Activated T-helper 1 cell treated with anti-CD3 and anti-CD28 coated beads, Interleukin-12 subunit alpha, Interleukin-12 subunit beta, Interleukin-2, Interleukin-4 antibody, amounts not matched to agents 30 ng/mL and 10 ng/mL and 1 ng/mL, durations not matched to agents 14 hours and 24 hours and 36 hours (primary cell): ENCODE measurements at regions of chr11 and their contacts with region 1.

Region 1: DNA sequence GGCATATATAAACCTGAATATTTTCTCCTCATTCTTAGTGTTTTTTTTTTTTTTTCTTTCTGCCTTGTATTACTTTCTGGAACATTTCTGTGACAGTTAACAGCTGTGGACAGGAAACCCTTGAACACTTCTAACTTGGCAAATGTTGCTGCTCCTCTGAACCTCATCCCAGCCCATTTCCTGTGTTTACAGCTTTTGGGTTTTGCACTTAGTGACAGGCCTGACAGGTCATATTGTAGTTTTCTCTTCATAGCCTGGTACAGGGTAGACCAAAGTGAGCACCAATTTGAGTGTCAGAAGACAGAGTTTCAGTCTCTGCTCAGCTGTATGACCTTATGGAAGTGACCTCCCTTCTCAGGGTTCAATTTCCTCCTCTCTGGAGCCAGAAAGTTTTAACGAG is 91.6 kb downstream of the STIM1 start:
- DNase-seq: peak; percentile 68
- H3K4me3 Mint-ChIP-seq: peak overlapping the region; percentile 74
- H3K27ac Mint-ChIP-seq: peak overlapping the region; percentile 91
- H3K4me1 Mint-ChIP-seq: peaks cover 94% of the 10 kb centered on the region
- H3K27me3 Mint-ChIP-seq: no peaks in the 10 kb centered on the region

Region 2: DNA sequence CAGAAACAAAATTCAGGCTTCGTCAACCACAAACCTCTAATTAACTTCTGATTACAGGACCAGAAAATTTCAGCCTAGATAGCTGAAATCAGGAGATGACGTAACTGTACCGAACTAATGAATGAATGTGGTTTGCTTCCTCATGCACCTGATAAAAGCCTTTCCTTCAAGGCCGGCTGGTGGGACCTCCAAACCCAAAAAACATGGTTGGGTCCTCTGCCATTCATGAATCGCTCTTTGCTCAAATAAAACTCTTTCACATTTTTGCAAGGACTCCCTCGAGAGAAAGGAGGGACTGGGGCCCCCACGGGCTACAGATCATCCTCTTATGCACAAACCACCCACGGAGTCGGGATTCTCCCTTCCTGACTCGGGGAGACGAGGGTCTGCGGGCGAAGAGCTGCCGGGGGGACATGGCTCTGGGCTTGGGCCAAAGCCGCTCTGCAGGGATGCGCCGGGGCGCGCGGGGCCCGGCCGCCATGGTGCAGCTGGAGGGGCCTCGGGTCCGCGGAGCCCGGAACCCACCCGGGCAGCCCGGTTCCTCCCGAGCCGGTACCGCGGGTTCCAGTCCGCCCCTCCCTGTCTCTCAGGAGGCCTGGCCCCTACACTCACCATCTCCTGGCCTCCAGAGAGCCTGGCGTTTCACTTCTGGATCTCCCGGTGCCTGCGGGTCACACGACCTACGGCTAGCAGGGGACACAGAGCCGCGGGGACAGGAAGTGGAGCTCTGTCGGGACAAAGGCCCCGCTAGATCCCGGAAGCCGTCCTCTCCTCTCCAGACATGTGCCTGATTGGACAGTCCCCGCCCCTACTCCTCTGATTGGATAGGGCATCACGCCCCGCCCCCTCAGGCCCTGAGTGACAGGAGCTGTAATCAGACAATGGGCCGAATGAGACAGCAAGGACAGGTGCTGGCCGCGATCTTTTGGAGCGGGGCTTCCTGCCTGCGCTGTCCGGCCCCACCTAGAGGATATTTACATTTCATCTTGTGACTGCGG is 568.3 kb before region 1 on chr11 and contains the start of gene ZNF195:
- intact Hi-C with region 1: loop called (anchors 10 kb)
- DNase-seq: peak; percentile 98
- H3K4me3 Mint-ChIP-seq: peak within 1 kb of the TSS; percentile 96
- H3K27ac Mint-ChIP-seq: peak within 1 kb of the TSS; percentile 94
- H3K4me1 Mint-ChIP-seq: peaks cover 30% of the 10 kb centered on the region
- H3K27me3 Mint-ChIP-seq: no peaks in the 10 kb centered on the region
- total RNA-seq, gene ZNF195: 41.2 and 42.8 TPM in 2 replicates

Region 3: DNA sequence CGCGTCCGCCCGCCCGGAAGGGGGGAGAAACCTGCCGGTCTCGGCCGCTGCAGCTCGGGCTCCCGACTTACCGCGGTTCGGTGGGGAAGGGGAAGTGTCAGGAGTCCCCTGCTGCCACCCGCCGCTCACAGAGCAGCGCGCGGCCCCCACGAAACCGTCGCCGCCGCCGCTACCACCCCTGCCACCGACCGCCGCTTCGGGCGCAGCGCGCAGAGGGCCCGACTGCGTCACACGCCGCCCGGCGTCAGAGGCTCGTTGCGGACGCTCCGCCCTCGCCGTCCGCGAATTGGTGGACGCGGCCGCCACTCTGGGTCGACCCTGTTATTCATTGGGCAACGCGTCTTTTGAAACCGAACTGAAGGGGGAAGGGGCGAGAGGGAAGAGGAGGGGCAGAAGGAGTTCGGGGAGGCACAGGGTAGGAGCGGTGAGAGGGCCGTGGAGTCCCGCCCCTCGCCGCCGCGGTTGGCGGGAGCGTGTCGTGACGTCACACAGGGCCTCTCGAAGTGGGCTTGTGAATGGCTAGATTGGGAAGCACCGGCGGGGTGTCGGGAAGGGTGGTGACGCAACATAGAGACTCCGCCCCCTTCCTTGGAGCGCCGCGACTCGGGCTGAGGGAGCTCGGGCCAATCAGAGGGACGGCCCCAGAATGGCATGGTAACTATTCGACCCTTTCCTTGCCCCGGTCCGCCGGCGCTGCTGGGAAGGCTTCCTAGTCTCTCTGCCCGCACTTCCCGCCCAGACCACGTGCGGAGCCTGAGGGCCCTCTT is 149.5 kb before region 1 on chr11 and contains the start of gene NUP98:
- intact Hi-C with region 1: loop called (anchors 5 kb)
- DNase-seq: peak; percentile 100
- H3K4me3 Mint-ChIP-seq: peak within 1 kb of the TSS; percentile 99
- H3K27ac Mint-ChIP-seq: peak within 1 kb of the TSS; percentile 95
- H3K4me1 Mint-ChIP-seq: peaks cover 35% of the 10 kb centered on the region
- H3K27me3 Mint-ChIP-seq: no peaks in the 10 kb centered on the region
- total RNA-seq, gene NUP98: 122 and 123 TPM in 2 replicates

Region 4: GRCh38 chr11:3824714-3825472 is 122.2 kb before region 1 on chr11:
- intact Hi-C with region 1: no loop called
- DNase-seq: peak; percentile 68
- H3K4me3 Mint-ChIP-seq: no peak overlapping the region
- H3K27ac Mint-ChIP-seq: no peak overlapping the region
- H3K4me1 Mint-ChIP-seq: peaks cover 38% of the 10 kb centered on the region
- H3K27me3 Mint-ChIP-seq: no peaks in the 10 kb centered on the region

Region 5: GRCh38 chr11:3894128-3894731 is 52.8 kb before region 1 on chr11:
- intact Hi-C with region 1: no loop called
- DNase-seq: no peak
- H3K4me3 Mint-ChIP-seq: no peak overlapping the region
- H3K27ac Mint-ChIP-seq: peak overlapping the region; percentile 35
- H3K4me1 Mint-ChIP-seq: peaks cover 45% of the 10 kb centered on the region
- H3K27me3 Mint-ChIP-seq: no peaks in the 10 kb centered on the region

Region 6: GRCh38 chr11:3920148-3920852 is 26.8 kb before region 1 on chr11:
- intact Hi-C with region 1: loop called (anchors 1 kb)
- DNase-seq: peak; percentile 59
- H3K4me3 Mint-ChIP-seq: no peak overlapping the region
- H3K27ac Mint-ChIP-seq: peak overlapping the region; percentile 43
- H3K4me1 Mint-ChIP-seq: peaks cover 55% of the 10 kb centered on the region
- H3K27me3 Mint-ChIP-seq: no peaks in the 10 kb centered on the region

Region 7: GRCh38 chr11:3959015-3959919 is 12.2 kb after region 1 on chr11:
- intact Hi-C with region 1: loop called (anchors 1 kb)
- DNase-seq: no peak
- H3K4me3 Mint-ChIP-seq: no peak overlapping the region
- H3K27ac Mint-ChIP-seq: no peak overlapping the region
- H3K4me1 Mint-ChIP-seq: peaks cover 70% of the 10 kb centered on the region
- H3K27me3 Mint-ChIP-seq: no peaks in the 10 kb centered on the region

Region 8: DNA sequence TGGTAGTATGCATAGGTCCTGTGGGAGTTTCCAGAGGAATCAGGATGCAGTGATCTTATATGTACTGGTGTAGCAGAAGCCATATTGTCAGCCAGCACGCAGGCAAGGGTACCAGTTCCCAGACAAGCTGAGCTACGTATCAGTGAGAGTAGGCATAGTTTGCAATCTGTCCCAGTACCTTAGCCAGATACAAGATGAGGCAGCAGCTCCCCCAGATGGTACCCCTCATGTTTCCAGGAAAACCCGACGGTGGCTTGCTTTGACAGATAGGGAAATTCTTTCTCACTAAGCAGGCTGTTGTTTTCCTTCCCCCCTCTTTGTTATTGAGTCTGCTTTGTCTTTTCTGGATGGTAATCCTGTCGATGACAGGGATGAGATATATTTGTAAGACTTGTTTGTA is 37.8 kb after region 1 on chr11:
- intact Hi-C with region 1: loop called (anchors 5 kb)
- DNase-seq: peak; percentile 8
- H3K4me3 Mint-ChIP-seq: no peak overlapping the region
- H3K27ac Mint-ChIP-seq: peak overlapping the region; percentile 59
- H3K4me1 Mint-ChIP-seq: peaks cover 76% of the 10 kb centered on the region
- H3K27me3 Mint-ChIP-seq: no peaks in the 10 kb centered on the region

Region 9: GRCh38 chr11:4059434-4059833 is 112.4 kb after region 1 on chr11:
- intact Hi-C with region 1: loop called (anchors 5 kb)
- DNase-seq: no peak
- H3K4me3 Mint-ChIP-seq: no peak overlapping the region
- H3K27ac Mint-ChIP-seq: no peak overlapping the region
- H3K4me1 Mint-ChIP-seq: peaks cover 27% of the 10 kb centered on the region
- H3K27me3 Mint-ChIP-seq: no peaks in the 10 kb centered on the region